GM12878 (cell line): ENCODE measurements at regions of chr11 and their contacts with region 1.

Region 1: DNA sequence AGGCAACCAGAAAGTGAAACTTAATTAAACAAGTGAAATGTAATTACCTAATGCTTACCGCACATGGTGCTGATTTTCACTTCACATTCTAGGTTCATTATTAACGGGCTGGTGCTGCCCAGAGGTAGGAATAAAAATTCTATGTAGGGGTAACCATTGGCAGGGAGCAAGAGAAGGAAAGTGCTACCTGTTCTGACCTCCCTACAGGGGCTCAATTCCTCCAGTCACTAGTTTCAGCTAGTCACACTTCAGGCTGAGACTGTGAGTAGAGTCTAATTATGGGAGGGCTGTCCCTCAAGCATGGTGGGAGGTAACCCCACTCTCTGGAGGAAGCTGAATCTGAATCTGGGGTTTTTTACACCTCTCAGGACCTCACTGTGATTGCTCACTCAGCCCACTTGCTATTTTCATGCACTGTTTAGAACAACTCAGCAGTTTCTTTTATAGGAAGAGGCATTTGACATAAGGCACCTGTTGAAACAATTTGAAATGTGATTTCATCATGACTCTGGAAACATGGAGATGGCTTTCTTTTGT is 75.4 kb downstream of the MAML2 start:
- DNase-seq: peak; percentile 95
- ATAC-seq: peak; percentile 97
- H3K4me3 ChIP-seq: no peak overlapping the region
- H3K27ac ChIP-seq: peak overlapping the region; percentile 73
- H3K4me1 ChIP-seq: peaks cover 21% of the 10 kb centered on the region
- H3K27me3 ChIP-seq: no peaks in the 10 kb centered on the region
- CTCF ChIP-seq: no peak
- EP300 ChIP-seq: no peak; a peak in 1 of 4 replicates
- POLR2A ChIP-seq: peak; percentile 38; the same call in 1 of the 2 replicates
- RAD21 ChIP-seq: peak; percentile 21; the same call in 1 of the 2 replicates

Region 2: GRCh38 chr11:96054870-96055705 is 212.5 kb before region 1 on chr11:
- CTCF ChIA-PET with region 1: interaction called, 3 read pairs
- POLR2A ChIA-PET with region 1: no interaction called
- RAD21 ChIA-PET with region 1: interaction called, 9 read pairs
- SMC1A ChIA-PET with region 1: interaction called, 3 read pairs
- in situ Hi-C with region 1: no loop called
- intact Hi-C with region 1: loop called (anchors 5 kb)
- DNase-seq: no peak
- ATAC-seq: no peak
- H3K4me3 ChIP-seq: no peak overlapping the region
- H3K27ac ChIP-seq: no peak overlapping the region
- H3K4me1 ChIP-seq: peaks cover 27% of the 10 kb centered on the region
- H3K27me3 ChIP-seq: no peaks in the 10 kb centered on the region
- CTCF ChIP-seq: peak; percentile 46 to 58 (median 48)
- EP300 ChIP-seq: no peak
- POLR2A ChIP-seq: no peak
- RAD21 ChIP-seq: peak; percentile 63

Region 3: GRCh38 chr11:96242971-96243647 is 24.5 kb before region 1 on chr11:
- CTCF ChIA-PET with region 1: interaction called, 3 read pairs
- POLR2A ChIA-PET with region 1: interaction called, 6 read pairs
- RAD21 ChIA-PET with region 1: interaction called, 3 read pairs
- SMC1A ChIA-PET with region 1: interaction called, 20 read pairs
- in situ Hi-C with region 1: no loop called
- intact Hi-C with region 1: no loop called
- DNase-seq: peak; percentile 86
- ATAC-seq: peak; percentile 93
- H3K4me3 ChIP-seq: peak overlapping the region; percentile 60
- H3K27ac ChIP-seq: peak overlapping the region; percentile 68
- H3K4me1 ChIP-seq: peaks cover 14% of the 10 kb centered on the region; the same call in 1 of the 2 replicates
- H3K27me3 ChIP-seq: no peaks in the 10 kb centered on the region
- CTCF ChIP-seq: no peak
- EP300 ChIP-seq: no peak
- POLR2A ChIP-seq: peak; percentile 73
- RAD21 ChIP-seq: no peak; the same call in 1 of the 2 replicates

Region 4: DNA sequence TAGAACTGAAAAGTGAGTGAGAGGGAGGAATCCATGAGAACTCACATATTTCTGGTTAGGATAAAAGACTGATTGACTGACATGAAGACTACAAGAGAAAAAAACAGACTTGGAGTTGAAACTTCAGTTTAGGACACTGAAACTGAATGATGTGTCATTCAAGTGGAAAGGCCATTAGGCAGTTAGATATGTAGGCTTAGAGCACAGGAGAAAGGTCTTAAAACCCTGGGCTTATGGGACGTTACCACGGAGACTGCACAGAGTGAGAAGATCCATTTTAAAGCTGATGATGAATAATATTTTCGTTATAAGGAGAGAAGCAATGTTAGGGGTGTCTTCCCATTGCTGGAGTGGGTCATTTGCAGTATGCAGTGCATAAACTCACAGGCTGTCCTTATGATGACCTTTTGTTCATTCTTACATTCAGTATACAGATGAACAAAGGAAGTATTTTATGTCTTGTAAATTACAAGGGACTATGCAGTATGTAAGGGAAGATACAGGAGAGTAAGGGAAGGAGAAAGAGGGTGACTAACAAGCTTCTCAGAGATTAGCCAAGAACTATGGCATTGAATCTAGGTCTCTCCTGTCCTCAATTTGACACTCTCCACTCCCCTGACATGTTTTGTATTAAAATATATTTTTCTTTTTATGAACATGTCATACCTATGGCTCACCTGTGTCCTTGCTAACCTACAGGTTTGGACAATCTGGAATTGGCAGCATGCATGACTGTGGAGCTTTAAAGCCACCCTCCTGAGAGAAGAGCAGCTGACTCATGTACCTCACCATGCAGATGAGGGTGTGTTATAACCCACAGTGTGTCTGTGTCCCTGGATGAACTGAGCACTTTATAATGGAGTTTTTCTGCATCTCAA is 11.7 kb after region 1 on chr11:
- CTCF ChIA-PET with region 1: interaction called, 4 read pairs
- POLR2A ChIA-PET with region 1: interaction called, 13 read pairs
- RAD21 ChIA-PET with region 1: interaction called, 7 read pairs
- SMC1A ChIA-PET with region 1: interaction called, 24 read pairs
- in situ Hi-C with region 1: no loop called
- intact Hi-C with region 1: no loop called
- DNase-seq: no peak
- ATAC-seq: peak; percentile 71
- H3K4me3 ChIP-seq: no peak overlapping the region
- H3K27ac ChIP-seq: peak overlapping the region; percentile 42; the same call in 1 of the 2 replicates
- H3K4me1 ChIP-seq: peaks cover 37% of the 10 kb centered on the region
- H3K27me3 ChIP-seq: no peaks in the 10 kb centered on the region
- CTCF ChIP-seq: no peak
- EP300 ChIP-seq: no peak
- POLR2A ChIP-seq: no peak
- RAD21 ChIP-seq: no peak

Region 5: DNA sequence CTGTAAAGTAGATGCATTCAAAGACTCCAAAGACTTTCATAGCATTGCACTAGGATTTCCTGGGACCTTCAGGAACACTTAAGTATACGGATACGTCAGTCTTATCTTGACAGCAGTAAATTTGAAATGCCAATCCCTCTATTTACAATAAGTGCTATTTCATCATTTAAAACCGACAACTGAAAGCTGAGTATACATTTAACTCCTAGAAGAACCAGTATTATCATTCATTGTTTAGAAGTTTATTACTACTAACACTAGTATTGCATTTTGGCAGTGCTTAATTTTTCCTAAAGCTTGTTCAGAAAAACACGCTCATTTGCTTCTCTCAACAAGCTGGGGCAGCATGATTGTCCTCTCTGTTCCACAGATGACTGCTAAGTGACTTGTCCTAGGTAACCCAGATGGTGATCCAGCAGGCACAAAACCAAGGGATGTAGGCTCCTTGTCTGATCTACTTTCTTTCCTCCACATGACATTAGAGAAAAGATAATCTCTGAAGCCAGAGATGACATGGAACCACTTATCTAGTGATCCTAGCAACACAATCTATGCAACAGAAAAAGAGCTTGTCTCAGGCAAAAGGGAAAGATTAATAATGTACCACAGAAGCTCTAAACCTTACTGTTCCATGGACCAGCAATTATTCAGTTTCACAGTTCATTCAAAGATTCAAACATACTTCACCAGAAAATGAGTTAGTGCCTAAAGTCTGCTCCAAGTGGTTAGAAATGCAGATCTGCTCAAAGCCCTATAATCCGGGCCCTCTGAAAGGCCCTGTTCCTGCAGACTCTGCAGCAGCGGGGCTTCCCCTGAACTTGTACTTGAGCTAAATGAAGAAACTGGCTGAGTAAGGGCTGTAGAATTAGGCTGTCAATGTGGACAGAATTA is 70.2 kb after region 1 on chr11:
- CTCF ChIA-PET with region 1: interaction called, 12 read pairs
- POLR2A ChIA-PET with region 1: interaction called, 7 read pairs
- RAD21 ChIA-PET with region 1: interaction called, 55 read pairs
- SMC1A ChIA-PET with region 1: interaction called, 57 read pairs
- in situ Hi-C with region 1: no loop called
- intact Hi-C with region 1: loop called (anchors 2 kb)
- DNase-seq: no peak
- ATAC-seq: peak; percentile 52
- H3K4me3 ChIP-seq: peak overlapping the region; percentile 100
- H3K27ac ChIP-seq: peak overlapping the region; percentile 80
- H3K4me1 ChIP-seq: peaks cover 4% of the 10 kb centered on the region
- H3K27me3 ChIP-seq: no peaks in the 10 kb centered on the region
- CTCF ChIP-seq: no peak
- EP300 ChIP-seq: no peak
- POLR2A ChIP-seq: no peak
- RAD21 ChIP-seq: no peak

Region 6: DNA sequence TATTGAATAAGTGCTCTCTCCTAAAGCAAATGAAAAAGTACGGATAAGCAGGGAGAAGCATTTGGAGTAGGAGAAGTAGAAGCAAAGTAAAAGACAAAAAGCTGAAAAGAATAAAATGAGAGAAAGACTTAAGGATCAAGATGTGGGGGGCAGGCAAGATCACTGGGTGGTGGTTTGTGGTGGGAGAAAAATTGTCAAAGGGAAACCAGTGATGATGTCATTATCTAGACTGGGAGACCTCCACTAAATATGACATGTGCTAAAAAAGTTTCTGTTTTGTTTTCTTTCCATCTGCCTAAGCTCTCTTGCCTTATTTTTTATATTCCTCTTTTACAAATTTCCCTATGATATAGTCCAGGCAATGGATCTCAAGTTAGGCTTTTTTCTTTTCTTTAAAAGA is 90.2 kb after region 1 on chr11:
- CTCF ChIA-PET with region 1: no interaction called
- POLR2A ChIA-PET with region 1: no interaction called
- RAD21 ChIA-PET with region 1: no interaction called
- SMC1A ChIA-PET with region 1: no interaction called
- in situ Hi-C with region 1: no loop called
- intact Hi-C with region 1: no loop called
- DNase-seq: no peak
- ATAC-seq: peak; percentile 80
- H3K4me3 ChIP-seq: no peak overlapping the region
- H3K27ac ChIP-seq: no peak overlapping the region; the same call in 1 of the 2 replicates
- H3K4me1 ChIP-seq: no peaks in the 10 kb centered on the region
- H3K27me3 ChIP-seq: no peaks in the 10 kb centered on the region
- CTCF ChIP-seq: no peak
- EP300 ChIP-seq: no peak
- POLR2A ChIP-seq: no peak
- RAD21 ChIP-seq: no peak